Endothelial cell of umbilical vein (primary cell): ENCODE measurements at regions of chr20 and their contacts with region 1.

Region 1: DNA sequence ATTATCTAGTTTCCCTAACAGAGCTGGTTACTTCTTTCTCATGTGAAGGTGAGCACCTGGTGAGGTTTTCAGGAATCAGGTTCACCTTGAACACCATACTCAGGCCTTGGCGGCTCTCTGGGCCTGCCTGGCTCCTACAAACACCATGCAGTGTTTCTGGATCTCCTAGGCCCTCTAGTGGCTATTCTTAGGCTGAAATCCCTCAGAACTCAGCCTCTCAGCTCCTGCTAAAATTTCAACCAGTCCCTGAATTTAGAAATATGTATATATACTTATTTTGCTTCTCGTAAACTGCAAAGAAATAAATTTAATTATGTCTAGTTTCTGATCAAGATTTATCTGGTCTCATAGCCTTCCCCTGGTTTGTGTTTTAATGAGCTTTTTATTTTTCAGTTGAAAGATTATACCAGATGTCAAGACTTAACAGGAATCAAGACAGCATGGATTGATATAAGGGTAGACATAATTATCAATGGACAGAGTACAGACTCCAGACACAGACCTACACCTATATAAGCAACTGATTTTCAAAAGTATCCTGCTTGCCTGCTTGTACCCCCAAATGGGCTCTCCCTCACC is 55.9 kb downstream of the ANKEF1 start:
- DNase-seq: peak; percentile 67
- H3K4me3 ChIP-seq: no peak overlapping the region
- H3K27ac ChIP-seq: no peak overlapping the region
- H3K4me1 ChIP-seq: no peaks in the 10 kb centered on the region
- H3K27me3 ChIP-seq: no peaks in the 10 kb centered on the region
- CTCF ChIP-seq: peak; percentile 69 to 78
- POLR2A ChIP-seq: no peak

Region 2: GRCh38 chr20:10047427-10047826 is 43.2 kb before region 1 on chr20:
- CTCF ChIA-PET with region 1: interaction called, 13 read pairs
- POLR2A ChIA-PET with region 1: no interaction called
- dilution Hi-C with region 1: no loop called
- intact Hi-C with region 1: no loop called
- DNase-seq: no peak
- H3K4me3 ChIP-seq: no peak overlapping the region
- H3K27ac ChIP-seq: no peak overlapping the region
- H3K4me1 ChIP-seq: no peaks in the 10 kb centered on the region
- H3K27me3 ChIP-seq: no peaks in the 10 kb centered on the region
- CTCF ChIP-seq: peak; percentile 12 to 28
- POLR2A ChIP-seq: no peak

Region 3: DNA sequence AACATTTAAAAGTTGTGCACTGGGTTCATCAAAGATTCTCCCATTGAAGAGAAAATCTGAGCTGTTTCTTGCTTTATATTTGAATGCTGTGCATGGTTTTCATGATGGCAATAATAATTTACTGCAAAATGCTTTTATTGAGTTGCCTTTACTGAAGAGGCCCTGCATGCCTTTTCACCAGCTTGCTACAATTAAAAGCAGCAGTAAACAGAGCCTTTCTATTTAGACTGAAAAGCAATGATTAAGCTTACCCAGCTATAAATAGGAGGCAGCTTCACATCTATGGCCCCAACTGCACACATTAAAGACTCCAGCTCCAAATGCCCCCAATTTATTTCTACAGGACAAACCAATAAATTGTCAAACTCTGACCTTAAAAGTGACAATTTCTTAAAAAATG is 14.4 kb after region 1 on chr20:
- CTCF ChIA-PET with region 1: interaction called, 12 read pairs
- POLR2A ChIA-PET with region 1: no interaction called
- dilution Hi-C with region 1: no loop called
- intact Hi-C with region 1: no loop called
- DNase-seq: no peak
- H3K4me3 ChIP-seq: no peak overlapping the region
- H3K27ac ChIP-seq: no peak overlapping the region
- H3K4me1 ChIP-seq: no peaks in the 10 kb centered on the region
- H3K27me3 ChIP-seq: no peaks in the 10 kb centered on the region
- CTCF ChIP-seq: no peak
- POLR2A ChIP-seq: no peak